ENCODE measurements at regions of chr2 and their contacts with region 1.

Region 1: DNA sequence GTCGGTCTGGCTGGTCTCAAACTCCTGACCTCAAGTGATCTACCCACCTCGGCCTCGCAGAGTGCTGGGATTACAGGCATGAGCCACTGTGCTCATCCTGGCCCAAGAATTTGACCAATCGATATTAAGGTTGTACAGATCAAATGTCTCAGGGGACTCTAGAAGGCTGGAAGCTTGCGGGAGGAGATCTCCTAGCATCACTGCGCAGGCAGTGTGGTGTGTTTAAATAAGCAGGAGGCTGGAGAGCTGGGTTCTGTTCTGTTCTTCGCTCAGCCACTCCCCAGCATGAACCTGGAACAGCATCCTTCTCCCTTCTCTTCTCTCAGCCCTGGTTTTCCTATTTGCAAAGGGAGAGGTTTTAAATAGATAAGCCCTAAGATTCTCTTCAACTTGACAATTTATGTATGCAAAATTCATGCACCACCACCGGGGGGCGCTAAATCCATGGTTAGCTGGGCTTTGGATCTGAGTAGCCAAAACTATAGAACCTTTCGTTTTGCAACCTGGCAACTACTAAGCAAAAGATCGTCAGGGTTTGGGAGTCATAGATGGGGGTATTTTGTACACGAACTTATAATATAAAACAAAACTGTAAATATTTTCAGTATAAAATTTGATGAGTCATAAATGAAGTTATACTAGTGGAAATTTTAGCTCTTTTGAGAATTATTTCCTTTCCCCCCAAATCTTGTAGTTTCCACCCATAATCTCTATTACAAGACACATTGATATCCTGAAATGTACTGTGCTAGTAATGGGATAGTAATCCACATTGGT is 60.6 kb downstream of the SLC16A14 start:
- DNase-seq: peak; percentile 89
- ATAC-seq: peak; percentile 74
- H3K4me3 Mint-ChIP-seq: no peak overlapping the region
- H3K27ac Mint-ChIP-seq: no peak overlapping the region
- H3K4me1 Mint-ChIP-seq: peaks cover 10% of the 10 kb centered on the region
- H3K27me3 Mint-ChIP-seq: no peaks in the 10 kb centered on the region
- CTCF ChIP-seq: peak; percentile 91

Region 2: GRCh38 chr2:229925201-229925600 is 82.9 kb before region 1 on chr2:
- CTCF ChIA-PET with region 1: no interaction called
- POLR2A ChIA-PET with region 1: no interaction called
- intact Hi-C with region 1: no loop called
- DNase-seq: no peak
- ATAC-seq: no peak
- H3K4me3 Mint-ChIP-seq: no peak overlapping the region
- H3K27ac Mint-ChIP-seq: no peak overlapping the region
- H3K4me1 Mint-ChIP-seq: peaks cover 28% of the 10 kb centered on the region
- H3K27me3 Mint-ChIP-seq: no peaks in the 10 kb centered on the region
- CTCF ChIP-seq: no peak

Region 3: GRCh38 chr2:229980431-229981184 is 27.5 kb before region 1 on chr2:
- CTCF ChIA-PET with region 1: no interaction called
- POLR2A ChIA-PET with region 1: no interaction called
- intact Hi-C with region 1: no loop called
- DNase-seq: peak; percentile 18
- ATAC-seq: peak; percentile 71
- H3K4me3 Mint-ChIP-seq: no peak overlapping the region
- H3K27ac Mint-ChIP-seq: no peak overlapping the region
- H3K4me1 Mint-ChIP-seq: peaks cover 9% of the 10 kb centered on the region
- H3K27me3 Mint-ChIP-seq: no peaks in the 10 kb centered on the region
- CTCF ChIP-seq: no peak

Region 4: GRCh38 chr2:230019742-230020141 is 11.6 kb after region 1 on chr2:
- CTCF ChIA-PET with region 1: interaction called, 15 read pairs
- POLR2A ChIA-PET with region 1: no interaction called
- intact Hi-C with region 1: no loop called
- DNase-seq: no peak
- ATAC-seq: no peak
- H3K4me3 Mint-ChIP-seq: no peak overlapping the region
- H3K27ac Mint-ChIP-seq: no peak overlapping the region
- H3K4me1 Mint-ChIP-seq: no peaks in the 10 kb centered on the region
- H3K27me3 Mint-ChIP-seq: no peaks in the 10 kb centered on the region
- CTCF ChIP-seq: no peak

Region 5: GRCh38 chr2:230160112-230160660 is 152.1 kb after region 1 on chr2:
- CTCF ChIA-PET with region 1: interaction called, 16 read pairs
- POLR2A ChIA-PET with region 1: no interaction called
- intact Hi-C with region 1: loop called (anchors 2 kb)
- DNase-seq: peak; percentile 61
- ATAC-seq: peak; percentile 62
- H3K4me3 Mint-ChIP-seq: no peak overlapping the region
- H3K27ac Mint-ChIP-seq: no peak overlapping the region
- H3K4me1 Mint-ChIP-seq: peaks cover 8% of the 10 kb centered on the region
- H3K27me3 Mint-ChIP-seq: no peaks in the 10 kb centered on the region
- CTCF ChIP-seq: peak; percentile 92

Region 6: DNA sequence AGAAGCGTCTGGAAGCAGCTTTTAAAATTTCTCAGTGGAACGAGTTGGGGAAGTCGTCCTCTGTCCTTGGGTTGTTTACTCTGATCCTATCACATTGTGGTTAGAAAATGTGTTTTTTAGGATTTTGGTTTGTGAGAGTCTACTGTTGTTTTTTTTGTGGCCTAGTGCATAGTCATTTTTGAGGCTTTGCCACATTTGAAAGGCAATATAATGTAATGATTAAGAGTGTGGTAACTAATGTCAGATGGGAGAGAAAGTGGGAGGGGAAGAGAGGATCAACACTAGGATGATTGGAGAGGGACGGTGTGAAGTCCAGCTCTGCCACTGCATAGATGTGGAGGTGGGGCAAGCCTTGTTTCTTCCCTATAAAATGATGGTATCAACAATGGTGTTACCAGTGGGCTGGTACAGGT is 327.3 kb after region 1 on chr2:
- CTCF ChIA-PET with region 1: no interaction called
- POLR2A ChIA-PET with region 1: no interaction called
- intact Hi-C with region 1: no loop called
- DNase-seq: no peak
- ATAC-seq: peak; percentile 53
- H3K4me3 Mint-ChIP-seq: peak overlapping the region; percentile 63
- H3K27ac Mint-ChIP-seq: peak overlapping the region; percentile 88
- H3K4me1 Mint-ChIP-seq: peaks cover 61% of the 10 kb centered on the region
- H3K27me3 Mint-ChIP-seq: no peaks in the 10 kb centered on the region
- CTCF ChIP-seq: no peak

Region 7: GRCh38 chr2:230614913-230615332 is 606.8 kb after region 1 on chr2:
- CTCF ChIA-PET with region 1: interaction called, 12 read pairs
- POLR2A ChIA-PET with region 1: no interaction called
- intact Hi-C with region 1: loop called (anchors 5 kb)
- DNase-seq: peak; percentile 82
- ATAC-seq: peak; percentile 77
- H3K4me3 Mint-ChIP-seq: no peak overlapping the region
- H3K27ac Mint-ChIP-seq: peak overlapping the region; percentile 23
- H3K4me1 Mint-ChIP-seq: peaks cover 24% of the 10 kb centered on the region
- H3K27me3 Mint-ChIP-seq: no peaks in the 10 kb centered on the region
- CTCF ChIP-seq: no peak

Measured in activated CD8-positive, alpha-beta T cell treated with anti-CD3 and anti-CD28 coated beads for 36 hours (primary cell).